Mammary epithelial cell (primary cell): ENCODE measurements at regions of chr18 and their contacts with region 1.

Region 1: GRCh38 chr18:30280880-30281470 is 761.6 kb downstream of the DSC3 start:
- DNase-seq: peak; percentile 53
- H3K4me3 ChIP-seq: no peak overlapping the region
- H3K27ac ChIP-seq: no peak overlapping the region
- H3K4me1 ChIP-seq: no peaks in the 10 kb centered on the region
- H3K27me3 ChIP-seq: no peaks in the 10 kb centered on the region
- CTCF ChIP-seq: peak; percentile 68 to 69

Region 2: DNA sequence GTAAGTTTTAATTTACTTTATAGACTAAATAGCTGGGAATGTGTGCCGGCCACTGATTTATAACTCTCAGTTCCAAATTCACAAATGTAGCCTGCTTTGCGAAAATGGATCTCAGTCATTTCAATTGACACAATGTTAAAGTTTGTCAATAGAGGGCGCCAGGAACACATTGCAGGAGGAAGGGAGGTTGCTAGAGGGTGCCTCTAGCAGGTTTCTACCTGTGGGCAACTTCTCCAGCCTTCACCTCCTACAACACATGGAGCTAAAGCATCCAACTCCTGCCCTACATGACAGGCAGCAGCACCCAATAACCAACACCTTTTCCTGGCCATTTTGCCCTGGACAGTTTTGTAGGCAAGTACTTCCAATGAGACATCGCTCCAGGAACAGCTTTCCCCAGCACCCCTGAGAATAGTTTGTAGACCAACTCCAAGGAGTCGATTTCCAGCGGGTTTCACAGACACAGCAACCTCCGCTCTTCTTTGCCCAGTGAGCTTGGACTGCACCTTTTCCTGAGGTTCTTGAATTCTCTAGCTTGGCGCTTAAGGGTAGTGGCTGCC is 1319.2 kb before region 1 on chr18:
- CTCF ChIA-PET with region 1: no interaction called
- dilution Hi-C with region 1: no loop called
- in situ Hi-C with region 1: no loop called
- intact Hi-C with region 1: loop called (anchors 2 kb)
- DNase-seq: peak; percentile 36
- H3K4me3 ChIP-seq: no peak overlapping the region
- H3K27ac ChIP-seq: no peak overlapping the region
- H3K4me1 ChIP-seq: no peaks in the 10 kb centered on the region
- H3K27me3 ChIP-seq: no peaks in the 10 kb centered on the region
- CTCF ChIP-seq: peak; percentile 80 to 81

Region 3: DNA sequence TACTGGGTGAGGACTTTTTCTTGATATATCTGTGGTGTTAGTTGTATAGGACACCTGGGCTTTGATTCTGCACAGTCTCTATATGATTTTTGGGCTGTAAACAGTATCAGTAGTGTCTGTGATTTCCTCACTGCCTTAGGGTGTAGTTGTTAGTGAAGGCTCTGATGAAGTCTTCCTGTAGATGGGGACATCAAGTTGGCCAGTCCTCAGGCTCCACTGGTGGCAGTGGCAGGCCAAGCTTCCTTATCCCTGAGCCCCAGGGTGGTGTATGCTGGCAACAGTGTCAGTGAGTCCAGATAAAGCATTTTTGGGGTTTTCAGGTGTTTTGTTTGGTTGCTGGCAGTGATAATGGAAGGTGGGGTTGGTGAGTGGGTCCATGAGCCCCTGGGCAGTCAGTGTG is 199.9 kb before region 1 on chr18:
- CTCF ChIA-PET with region 1: interaction called, 4 read pairs
- dilution Hi-C with region 1: no loop called
- in situ Hi-C with region 1: loop called in 1 of 2 experiments (anchors 10 kb)
- intact Hi-C with region 1: loop called (anchors 2 kb)
- DNase-seq: no peak
- H3K4me3 ChIP-seq: no peak overlapping the region
- H3K27ac ChIP-seq: no peak overlapping the region
- H3K4me1 ChIP-seq: no peaks in the 10 kb centered on the region
- H3K27me3 ChIP-seq: no peaks in the 10 kb centered on the region
- CTCF ChIP-seq: no peak